ENCODE measurements at regions of chr2 and their contacts with region 1.

Region 1: DNA sequence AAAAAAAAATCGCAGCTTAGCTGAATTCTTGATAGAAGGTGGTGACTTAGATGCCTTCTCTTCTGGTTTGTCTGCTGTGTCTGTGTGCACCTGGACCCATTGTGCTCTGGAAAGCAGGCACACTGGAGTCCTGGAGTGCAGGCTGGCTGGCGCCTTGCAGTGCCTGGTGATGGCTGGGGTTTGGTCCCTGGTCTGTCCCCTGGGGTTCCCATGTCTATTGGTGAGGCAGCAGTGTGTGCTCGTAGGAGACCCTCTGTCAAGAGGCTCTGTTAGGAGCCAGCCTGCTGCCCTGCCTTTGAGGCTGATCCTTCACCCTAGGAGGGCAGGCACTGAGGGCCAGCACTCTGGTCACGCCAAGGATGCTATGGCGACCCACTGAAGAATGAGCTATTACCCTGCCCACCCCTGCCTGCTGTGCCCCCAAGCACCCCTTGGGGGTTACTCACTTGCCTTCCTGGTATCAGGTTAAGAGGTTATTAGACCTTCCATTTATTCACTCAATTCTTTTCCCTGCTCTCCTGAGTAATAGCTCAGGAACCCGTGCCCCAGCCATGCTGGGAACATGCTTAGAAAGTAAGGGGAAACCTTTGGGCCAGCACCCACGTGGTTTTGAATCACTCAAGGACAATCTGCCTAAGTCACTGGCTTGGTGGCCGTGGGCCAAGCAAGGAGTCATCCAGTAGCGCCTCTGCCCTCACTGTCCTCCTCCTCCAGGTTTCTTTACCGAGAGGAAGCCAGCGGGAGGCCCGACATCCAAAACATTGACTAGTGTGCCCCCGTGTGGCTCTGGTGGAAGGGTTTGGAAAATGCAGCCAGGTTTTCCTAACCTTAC is 284.5 kb downstream of the PRKCE start:
- DNase-seq: peak; percentile 99
- ATAC-seq: peak; percentile 62
- H3K4me3 ChIP-seq: no peak overlapping the region
- H3K27ac ChIP-seq: peak overlapping the region; percentile 67
- H3K4me1 ChIP-seq: peaks cover 42% of the 10 kb centered on the region
- H3K27me3 ChIP-seq: no peaks in the 10 kb centered on the region
- CTCF ChIP-seq: peak; percentile 87

Region 2: DNA sequence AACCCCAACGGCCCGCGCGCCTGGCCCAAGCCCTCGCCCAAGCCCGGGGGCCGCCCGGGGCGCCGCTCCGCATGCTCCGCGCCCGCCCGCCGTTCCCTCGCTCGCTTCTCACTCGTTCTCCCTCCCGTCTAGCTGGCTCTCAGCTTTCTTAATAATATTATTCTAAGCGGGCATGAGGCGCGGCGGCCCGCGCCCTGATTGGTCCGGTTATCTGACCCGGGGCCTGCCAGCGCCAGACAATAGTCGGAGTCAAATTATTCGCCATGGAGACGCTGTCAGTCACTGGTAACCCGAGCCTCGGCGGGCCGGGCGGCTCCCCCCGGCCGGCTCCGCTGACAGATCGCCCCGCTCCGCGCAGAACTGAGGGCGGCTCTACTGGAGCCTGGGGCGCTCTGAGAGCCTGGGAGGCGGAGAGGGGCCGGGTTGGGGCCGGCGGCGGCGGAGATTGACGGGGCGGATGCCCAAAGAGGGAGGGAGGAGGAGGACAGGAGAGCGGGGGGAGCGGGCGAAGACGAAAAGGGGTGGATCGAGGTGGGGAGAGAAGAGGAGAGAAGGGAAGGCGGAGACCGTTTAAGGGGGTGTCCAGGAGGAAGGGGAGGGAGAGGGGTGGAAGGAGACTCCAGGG is 926.6 kb before region 1 on chr2 and contains the start of gene SIX2:
- CTCF ChIA-PET with region 1: no interaction called
- POLR2A ChIA-PET with region 1: no interaction called
- intact Hi-C with region 1: loop called (anchors 2 kb)
- DNase-seq: peak; percentile 99
- ATAC-seq: peak; percentile 92
- H3K4me3 ChIP-seq: peak within 1 kb of the TSS; percentile 74
- H3K27ac ChIP-seq: peak within 1 kb of the TSS; percentile 64
- H3K4me1 ChIP-seq: peaks cover 26% of the 10 kb centered on the region
- H3K27me3 ChIP-seq: no peaks in the 10 kb centered on the region
- CTCF ChIP-seq: no peak
- total RNA-seq, gene SIX2: 26.8 and 27.9 TPM in 2 replicates

Region 3: DNA sequence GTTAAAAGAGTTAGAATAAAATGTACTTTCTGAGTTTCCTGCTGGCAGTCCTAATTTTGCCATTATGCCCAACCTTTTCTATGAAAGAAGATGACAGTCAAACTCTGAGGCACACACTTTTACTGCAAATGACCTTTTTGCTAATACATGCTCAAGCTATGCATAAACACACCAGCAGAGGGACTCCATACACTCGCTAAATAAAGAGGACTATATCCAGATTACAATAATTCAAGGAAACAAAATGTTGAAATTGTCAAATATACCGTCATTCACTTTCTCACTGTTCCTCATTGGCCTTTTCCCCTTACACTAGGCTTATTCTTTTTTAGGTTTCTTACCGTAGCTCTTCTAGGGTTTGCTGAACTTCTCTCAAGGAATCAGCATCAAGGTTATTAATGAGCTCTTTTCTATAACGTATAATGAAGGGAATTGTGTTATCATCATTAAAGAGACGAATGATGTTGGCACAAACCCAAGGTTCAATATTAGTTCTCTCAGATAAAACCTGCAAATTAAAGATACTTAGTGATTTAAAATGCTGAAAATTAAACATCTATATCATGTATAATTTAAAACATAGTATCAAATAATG is 350.6 kb before region 1 on chr2:
- CTCF ChIA-PET with region 1: no interaction called
- POLR2A ChIA-PET with region 1: no interaction called
- intact Hi-C with region 1: loop called (anchors 1 kb)
- DNase-seq: peak; percentile 72
- ATAC-seq: peak; percentile 74
- H3K4me3 ChIP-seq: no peak overlapping the region
- H3K27ac ChIP-seq: no peak overlapping the region
- H3K4me1 ChIP-seq: no peaks in the 10 kb centered on the region
- H3K27me3 ChIP-seq: no peaks in the 10 kb centered on the region
- CTCF ChIP-seq: peak; percentile 83

Region 4: DNA sequence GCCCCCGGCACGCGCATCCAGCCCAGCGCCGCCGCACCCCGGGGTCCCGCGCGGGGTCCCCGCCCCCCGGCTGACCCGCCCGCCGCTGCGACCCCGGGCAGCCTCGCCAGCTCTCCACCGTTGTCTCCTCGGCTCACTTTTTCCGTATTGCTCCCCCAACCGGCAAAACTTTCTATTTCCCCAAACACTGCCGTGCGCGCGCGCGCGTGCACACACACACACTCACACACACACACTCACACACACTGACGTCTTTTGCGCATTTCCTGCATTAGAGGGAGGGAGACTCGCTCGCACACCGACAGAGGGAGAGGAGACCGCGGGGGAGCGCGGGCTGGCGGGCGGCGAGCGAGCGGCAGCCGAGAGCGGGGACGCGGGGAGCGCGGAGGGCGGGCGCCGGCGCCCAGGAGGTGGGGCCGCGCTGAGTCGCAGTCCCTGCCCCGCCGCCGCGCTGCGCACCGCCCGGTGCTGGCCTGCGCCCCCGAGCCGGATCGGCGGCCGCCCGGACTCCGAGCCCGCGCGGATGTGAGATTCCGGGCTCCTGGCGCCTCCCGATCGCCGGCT is 285.1 kb before region 1 on chr2:
- CTCF ChIA-PET with region 1: interaction called, 4 read pairs
- POLR2A ChIA-PET with region 1: no interaction called
- intact Hi-C with region 1: loop called (anchors 1 kb)
- DNase-seq: peak; percentile 95
- ATAC-seq: peak; percentile 74
- H3K4me3 ChIP-seq: peak overlapping the region; percentile 100
- H3K27ac ChIP-seq: peak overlapping the region; percentile 47
- H3K4me1 ChIP-seq: peaks cover 18% of the 10 kb centered on the region
- H3K27me3 ChIP-seq: no peaks in the 10 kb centered on the region
- CTCF ChIP-seq: peak; percentile 54

Region 5: GRCh38 chr2:45851613-45852304 is 84.2 kb before region 1 on chr2:
- CTCF ChIA-PET with region 1: no interaction called
- POLR2A ChIA-PET with region 1: no interaction called
- intact Hi-C with region 1: loop called (anchors 1 kb)
- DNase-seq: peak; percentile 97
- ATAC-seq: peak; percentile 97
- H3K4me3 ChIP-seq: no peak overlapping the region
- H3K27ac ChIP-seq: peak overlapping the region; percentile 94
- H3K4me1 ChIP-seq: peaks cover 24% of the 10 kb centered on the region
- H3K27me3 ChIP-seq: no peaks in the 10 kb centered on the region
- CTCF ChIP-seq: no peak

Region 6: GRCh38 chr2:45993476-45993991 is 57.5 kb after region 1 on chr2:
- CTCF ChIA-PET with region 1: no interaction called
- POLR2A ChIA-PET with region 1: interaction called, 6 read pairs
- intact Hi-C with region 1: loop called (anchors 1 kb)
- DNase-seq: peak; percentile 86
- ATAC-seq: no peak
- H3K4me3 ChIP-seq: no peak overlapping the region
- H3K27ac ChIP-seq: peak overlapping the region; percentile 92
- H3K4me1 ChIP-seq: peaks cover 30% of the 10 kb centered on the region
- H3K27me3 ChIP-seq: no peaks in the 10 kb centered on the region
- CTCF ChIP-seq: peak; percentile 91

Region 7: DNA sequence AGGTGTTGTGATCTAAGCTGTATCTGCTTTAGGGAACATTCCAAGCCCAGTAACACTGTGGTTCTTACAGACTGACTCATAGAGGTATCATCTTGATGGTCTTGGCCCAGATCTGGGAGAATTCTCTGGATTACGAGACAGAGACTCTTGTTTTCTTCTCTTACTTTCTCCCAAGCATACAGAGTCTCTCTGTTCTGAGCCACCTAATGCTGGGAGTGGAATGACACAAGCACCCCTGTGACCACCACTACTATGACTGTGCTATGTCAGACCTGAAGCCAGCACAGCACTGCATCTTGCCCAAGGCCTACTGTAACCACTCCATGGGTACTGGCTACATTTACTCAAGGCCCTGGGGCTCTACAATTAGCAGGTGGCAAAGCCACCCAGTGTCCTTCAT is 280.2 kb after region 1 on chr2:
- CTCF ChIA-PET with region 1: no interaction called
- POLR2A ChIA-PET with region 1: no interaction called
- intact Hi-C with region 1: no loop called
- DNase-seq: peak; percentile 65
- ATAC-seq: peak; percentile 55
- H3K4me3 ChIP-seq: no peak overlapping the region
- H3K27ac ChIP-seq: peak overlapping the region; percentile 57
- H3K4me1 ChIP-seq: peaks cover 9% of the 10 kb centered on the region
- H3K27me3 ChIP-seq: no peaks in the 10 kb centered on the region
- CTCF ChIP-seq: no peak